Sciatic nerve (tissue), 2 donors: ENCODE measurements at regions of chr3 and their contacts with region 1.

Region 1: GRCh38 chr3:155890671-155891190 is 20.3 kb downstream of the GMPS start:
- DNase-seq: no peak
- ATAC-seq: no peak

Region 2: DNA sequence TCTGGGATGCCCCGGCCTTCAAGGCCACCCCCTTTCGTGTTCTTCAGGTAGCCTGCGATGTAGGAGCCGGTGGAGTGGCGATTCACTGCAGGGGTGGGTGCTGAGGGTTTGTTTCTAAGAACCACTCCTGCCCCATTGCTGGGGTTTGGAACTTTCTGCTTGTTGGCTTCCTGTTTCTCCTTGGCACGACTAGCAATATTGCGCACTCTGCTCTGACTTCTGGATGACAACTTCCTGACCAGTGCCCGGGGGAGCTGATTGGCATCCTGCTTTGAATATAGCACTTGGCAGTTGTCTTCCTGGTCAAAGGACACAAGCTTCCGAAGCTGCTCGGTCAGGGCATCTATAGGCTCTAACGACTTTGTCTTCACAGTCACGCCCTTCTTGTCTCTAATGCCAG is 409.6 kb before region 1 on chr3:
- intact Hi-C with region 1: no loop called
- DNase-seq: no peak
- ATAC-seq: no peak

Region 3: GRCh38 chr3:155921486-155921885 is 30.8 kb after region 1 on chr3:
- intact Hi-C with region 1: loop called (anchors 2 kb)
- DNase-seq: no peak
- ATAC-seq: no peak